Panc1 (cell line): ENCODE measurements at regions of chr19 and their contacts with region 1.

Region 1: GRCh38 chr19:39435499-39436349 is at the start of gene RPS16:
- DNase-seq: peak; percentile 100
- ATAC-seq: peak; percentile 87
- H3K4me3 ChIP-seq: peak within 1 kb of the TSS; percentile 29 to 58
- H3K27ac ChIP-seq: peak within 1 kb of the TSS; percentile 84
- H3K4me1 ChIP-seq: peaks cover 77% of the 10 kb centered on the region
- H3K27me3 ChIP-seq: no peaks in the 10 kb centered on the region
- CTCF ChIP-seq: no peak
- total RNA-seq, gene RPS16: 27,832 TPM

Region 2: DNA sequence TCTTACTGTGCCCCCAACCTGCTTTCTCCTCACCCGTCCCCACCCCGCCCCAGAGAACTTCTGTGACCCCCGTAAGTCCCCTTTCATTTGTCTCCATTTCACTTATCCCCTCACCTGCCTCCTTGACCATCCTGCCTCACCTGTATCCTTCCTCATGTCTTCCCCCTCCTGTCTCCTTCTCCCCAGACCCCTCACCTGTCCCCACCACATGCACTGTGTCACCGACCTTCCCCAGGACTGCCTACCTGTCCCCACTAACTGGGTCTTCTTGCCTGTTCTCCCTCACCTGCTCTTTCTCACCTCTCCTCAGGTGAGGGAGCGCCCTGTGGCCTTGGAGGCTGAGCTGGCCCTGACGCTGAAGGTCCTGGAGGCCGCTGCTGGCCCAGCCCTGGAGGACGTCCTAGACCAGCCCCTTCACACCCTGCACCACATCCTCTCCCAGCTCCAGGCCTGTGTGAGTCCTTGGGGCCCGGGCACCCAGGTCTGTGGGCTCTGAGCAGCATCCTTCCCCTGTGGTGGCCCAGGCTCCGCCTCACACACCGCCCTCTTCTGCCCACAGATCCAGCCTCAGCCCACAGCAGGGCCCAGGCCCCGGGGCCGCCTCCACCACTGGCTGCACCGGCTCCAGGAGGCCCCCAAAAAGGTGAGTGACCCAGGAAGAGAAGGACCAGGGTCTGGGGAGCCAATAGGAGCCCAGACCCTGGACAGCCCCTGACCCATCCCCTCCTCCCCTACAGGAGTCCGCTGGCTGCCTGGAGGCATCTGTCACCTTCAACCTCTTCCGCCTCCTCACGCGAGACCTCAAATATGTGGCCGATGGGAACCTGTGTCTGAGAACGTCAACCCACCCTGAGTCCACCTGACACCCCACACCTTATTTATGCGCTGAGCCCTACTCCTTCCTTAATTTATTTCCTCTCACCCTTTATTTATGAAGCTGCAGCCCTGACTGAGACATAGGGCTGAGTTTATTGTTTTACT is 137.8 kb before region 1 on chr19:
- CTCF ChIA-PET with region 1: no interaction called
- POLR2A ChIA-PET with region 1: interaction called, 15 read pairs
- in situ Hi-C with region 1: no loop called
- intact Hi-C with region 1: no loop called
- DNase-seq: no peak
- ATAC-seq: peak; percentile 49
- H3K4me3 ChIP-seq: no peak overlapping the region
- H3K27ac ChIP-seq: no peak overlapping the region
- H3K4me1 ChIP-seq: no peaks in the 10 kb centered on the region; the same call in 1 of the 2 replicates
- H3K27me3 ChIP-seq: peaks cover 15% of the 10 kb centered on the region
- CTCF ChIP-seq: no peak

Region 3: GRCh38 chr19:39381910-39382611 is 53.7 kb before region 1 on chr19:
- CTCF ChIA-PET with region 1: no interaction called
- POLR2A ChIA-PET with region 1: interaction called, 14 read pairs
- in situ Hi-C with region 1: no loop called
- intact Hi-C with region 1: no loop called
- DNase-seq: no peak
- ATAC-seq: 0 out of 2 replicates have a peak, but pooled peaks have one; percentile 4
- H3K4me3 ChIP-seq: no peak overlapping the region
- H3K27ac ChIP-seq: no peak overlapping the region
- H3K4me1 ChIP-seq: peaks cover 21% of the 10 kb centered on the region
- H3K27me3 ChIP-seq: no peaks in the 10 kb centered on the region
- CTCF ChIP-seq: no peak

Region 4: DNA sequence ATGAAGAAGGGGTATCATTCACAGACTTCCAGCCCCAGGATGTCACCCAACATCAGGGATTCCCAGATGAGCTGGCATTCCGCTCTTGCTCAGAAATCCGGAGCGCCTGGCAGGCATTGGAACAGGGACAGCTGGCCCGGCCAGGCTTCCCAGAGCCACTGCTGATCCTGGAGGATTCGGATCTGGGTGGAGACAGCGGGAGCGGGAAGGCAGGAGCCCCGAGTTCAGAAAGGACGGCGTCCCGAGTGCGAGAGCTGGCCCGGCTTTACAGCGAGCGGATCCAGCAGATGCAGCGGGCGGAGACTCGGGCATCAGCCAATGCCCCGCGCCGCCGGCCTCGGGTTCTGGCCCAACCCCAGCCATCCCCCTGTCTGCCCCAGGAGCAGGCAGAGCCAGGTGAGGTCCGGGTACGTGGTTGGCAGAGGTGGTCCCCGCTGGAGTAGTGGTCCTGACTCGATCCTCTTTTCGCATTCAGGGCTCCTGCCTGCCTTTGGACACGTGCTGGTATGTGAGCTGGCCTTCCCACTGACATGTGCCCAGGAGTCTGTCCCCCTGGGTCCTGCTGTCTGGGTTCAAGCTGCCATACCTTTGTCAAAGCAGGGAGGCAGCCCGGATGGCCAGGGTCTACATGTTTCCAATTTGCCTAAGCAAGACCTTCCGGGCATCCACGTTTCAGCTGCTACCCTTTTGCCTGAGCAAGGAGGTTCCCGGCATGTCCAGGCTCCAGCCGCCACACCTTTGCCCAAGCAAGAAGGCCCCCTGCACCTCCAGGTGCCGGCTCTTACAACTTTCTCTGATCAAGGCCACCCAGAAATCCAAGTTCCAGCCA is 12.3 kb before region 1 on chr19:
- CTCF ChIA-PET with region 1: interaction called, 64 read pairs
- POLR2A ChIA-PET with region 1: interaction called, 226 read pairs
- in situ Hi-C with region 1: no loop called
- intact Hi-C with region 1: no loop called
- DNase-seq: no peak
- ATAC-seq: no peak
- H3K4me3 ChIP-seq: no peak overlapping the region
- H3K27ac ChIP-seq: peak overlapping the region; percentile 3
- H3K4me1 ChIP-seq: peaks cover 24% of the 10 kb centered on the region
- H3K27me3 ChIP-seq: no peaks in the 10 kb centered on the region
- CTCF ChIP-seq: no peak

Region 5: DNA sequence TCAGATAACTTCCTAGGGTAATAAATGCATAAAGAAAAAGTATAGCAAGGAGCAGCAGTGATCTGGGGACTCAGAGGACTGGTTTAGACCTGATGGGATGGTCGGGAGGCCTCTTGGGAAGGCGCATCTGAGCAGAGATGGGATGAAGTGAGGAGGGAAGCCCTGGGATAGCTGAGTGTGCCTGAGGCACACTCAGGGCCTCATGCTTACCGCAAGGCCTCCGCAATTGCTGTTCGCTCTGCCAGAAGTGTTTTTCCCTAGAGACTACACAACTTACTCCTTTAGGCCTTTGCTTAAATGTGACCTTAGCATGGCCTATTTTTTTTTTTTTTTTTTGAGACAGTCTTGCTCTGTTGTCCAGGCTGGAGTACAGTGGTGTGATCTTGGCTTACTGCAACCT is 58.9 kb after region 1 on chr19:
- CTCF ChIA-PET with region 1: interaction called, 104 read pairs
- POLR2A ChIA-PET with region 1: interaction called, 66 read pairs
- in situ Hi-C with region 1: no loop called
- intact Hi-C with region 1: loop called (anchors 2 kb)
- DNase-seq: no peak
- ATAC-seq: no peak
- H3K4me3 ChIP-seq: no peak overlapping the region
- H3K27ac ChIP-seq: no peak overlapping the region
- H3K4me1 ChIP-seq: peaks cover 20% of the 10 kb centered on the region
- H3K27me3 ChIP-seq: peaks cover 4% of the 10 kb centered on the region
- CTCF ChIP-seq: no peak

Region 6: DNA sequence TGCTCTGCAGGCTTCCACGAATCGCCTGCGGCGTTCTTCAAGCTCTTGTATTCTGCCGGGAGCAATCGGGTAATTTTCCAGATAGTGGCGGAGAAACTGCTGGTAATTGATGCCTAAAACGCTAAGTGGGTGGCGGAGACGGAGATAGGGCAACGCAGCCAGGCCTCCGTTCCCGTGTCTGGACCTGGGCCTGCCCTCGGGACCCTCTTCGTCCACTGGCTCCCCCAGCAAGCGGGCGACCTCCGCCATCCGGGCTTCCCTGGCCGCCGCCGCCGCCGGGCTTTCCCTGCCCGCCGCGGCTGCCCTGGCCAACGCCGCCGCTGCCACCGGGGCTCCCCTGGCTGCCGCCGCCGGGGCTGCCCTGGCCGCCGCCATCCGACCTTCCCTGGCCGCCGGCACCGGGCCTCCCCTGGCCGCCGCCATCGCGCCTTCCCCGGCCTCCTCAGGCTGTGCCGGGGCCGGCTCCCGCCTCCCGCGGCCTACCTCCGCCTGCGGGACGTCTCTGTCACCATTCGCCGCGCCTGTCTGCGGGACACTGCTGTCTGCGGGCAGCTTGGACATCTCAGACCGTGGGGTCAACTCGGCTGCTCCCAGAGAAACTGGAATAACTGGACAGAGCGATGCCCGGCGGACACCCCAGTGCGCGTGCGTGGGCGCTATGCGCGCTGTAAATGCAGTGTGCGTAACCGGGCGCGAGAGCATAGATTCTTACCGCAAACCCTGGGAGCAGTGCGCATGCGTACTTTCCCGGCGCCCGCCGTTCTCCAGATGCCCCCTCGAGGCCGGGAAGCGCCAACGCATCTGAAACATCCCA is 104.0 kb after region 1 on chr19 and contains the start of gene EID2:
- CTCF ChIA-PET with region 1: interaction called, 193 read pairs
- POLR2A ChIA-PET with region 1: interaction called, 196 read pairs
- in situ Hi-C with region 1: no loop called
- intact Hi-C with region 1: loop called (anchors 1 kb)
- DNase-seq: peak; percentile 100
- ATAC-seq: peak; percentile 97
- H3K4me3 ChIP-seq: peak within 1 kb of the TSS; percentile 36 to 59
- H3K27ac ChIP-seq: peak within 1 kb of the TSS; percentile 78
- H3K4me1 ChIP-seq: peaks cover 26% of the 10 kb centered on the region
- H3K27me3 ChIP-seq: peaks cover 11% of the 10 kb centered on the region
- CTCF ChIP-seq: no peak
- total RNA-seq, gene EID2: 163 TPM

Region 7: DNA sequence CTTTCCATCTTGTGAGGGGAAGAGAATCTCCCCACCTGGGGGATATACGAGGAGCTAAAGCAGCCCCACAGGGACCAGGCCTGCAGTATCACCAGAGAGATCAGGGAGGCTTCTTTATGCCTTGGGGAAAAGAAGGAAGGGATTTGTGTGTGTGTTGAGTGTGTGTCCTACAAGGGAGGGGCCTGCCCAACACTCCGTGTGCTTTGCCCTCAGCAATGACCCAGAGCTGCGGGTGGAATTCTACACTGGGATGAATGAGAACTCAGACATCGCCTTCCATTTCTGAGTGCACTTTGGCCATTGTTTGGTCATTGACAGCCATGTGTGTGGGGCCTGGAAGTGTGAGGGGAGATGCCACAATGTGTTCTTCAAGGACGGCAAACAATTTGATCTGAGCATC is 204.5 kb after region 1 on chr19:
- CTCF ChIA-PET with region 1: no interaction called
- POLR2A ChIA-PET with region 1: no interaction called
- in situ Hi-C with region 1: no loop called
- intact Hi-C with region 1: no loop called
- DNase-seq: no peak
- ATAC-seq: peak; percentile 9
- H3K4me3 ChIP-seq: no peak overlapping the region
- H3K27ac ChIP-seq: no peak overlapping the region
- H3K4me1 ChIP-seq: no peaks in the 10 kb centered on the region
- H3K27me3 ChIP-seq: peaks cover 88% of the 10 kb centered on the region
- CTCF ChIP-seq: no peak

Region 8: GRCh38 chr19:39970675-39971379 is 535.1 kb after region 1 on chr19 and contains the start of gene PSMC4:
- CTCF ChIA-PET with region 1: interaction called, 10 read pairs
- POLR2A ChIA-PET with region 1: interaction called, 10 read pairs
- in situ Hi-C with region 1: no loop called
- intact Hi-C with region 1: no loop called
- DNase-seq: peak; percentile 100
- ATAC-seq: peak; percentile 98
- H3K4me3 ChIP-seq: peak within 1 kb of the TSS; percentile 35 to 50
- H3K27ac ChIP-seq: peak within 1 kb of the TSS; percentile 82
- H3K4me1 ChIP-seq: peaks cover 17% of the 10 kb centered on the region
- H3K27me3 ChIP-seq: no peaks in the 10 kb centered on the region
- CTCF ChIP-seq: no peak
- total RNA-seq, gene PSMC4: 2,386 TPM